GM10248 (cell line): ENCODE measurements at regions of chr9 and their contacts with region 1.

Region 1: GRCh38 chr9:35732122-35732799 is at the starts of genes CREB3 and TLN1:
- DNase-seq: peak; percentile 97
- CTCF ChIP-seq: peak; percentile 47

Region 2: DNA sequence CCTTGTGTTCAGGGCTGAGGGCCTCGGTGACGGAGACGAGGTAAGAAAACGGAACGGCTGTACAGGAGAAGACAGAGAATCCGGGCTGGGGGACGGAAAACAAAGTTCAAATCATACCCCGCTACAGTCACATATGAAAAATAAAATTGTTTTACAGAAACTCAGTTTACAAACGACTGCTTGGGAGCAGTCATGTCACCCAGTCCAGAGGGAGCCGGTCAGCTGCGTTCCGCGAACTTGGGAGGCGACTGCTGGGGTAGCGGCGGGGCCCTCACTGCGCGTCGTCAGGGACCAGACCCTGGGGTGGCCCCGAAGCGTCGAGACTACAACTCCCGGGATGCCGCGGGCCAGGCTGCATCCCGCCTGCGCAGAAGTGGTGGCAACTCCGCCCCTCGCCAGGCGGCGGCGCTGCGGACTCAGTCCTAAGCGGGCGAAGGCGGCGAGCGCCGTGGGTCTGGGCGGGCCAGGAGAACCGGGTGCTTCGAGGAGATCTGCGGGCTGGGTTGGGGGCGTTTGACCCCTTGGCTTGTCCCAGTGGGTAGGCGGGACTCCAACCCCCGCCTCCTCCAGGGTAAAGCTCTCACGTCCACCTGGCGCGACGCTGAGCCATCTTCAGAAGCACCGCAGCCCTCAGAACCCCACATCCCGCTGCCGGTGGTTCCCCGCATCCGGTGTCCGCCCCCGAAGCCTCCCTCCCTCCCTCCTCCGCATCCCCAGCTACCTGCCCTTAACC is 85.6 kb before region 1 on chr9:
- CTCF ChIA-PET with region 1: interaction called, 20 read pairs
- POLR2A ChIA-PET with region 1: interaction called, 5 read pairs
- DNase-seq: peak; percentile 94
- CTCF ChIP-seq: peak; percentile 98

Region 3: GRCh38 chr9:35690431-35691333 is 41.6 kb before region 1 on chr9:
- CTCF ChIA-PET with region 1: interaction called, 130 read pairs
- POLR2A ChIA-PET with region 1: interaction called, 4 read pairs
- DNase-seq: peak; percentile 59
- CTCF ChIP-seq: no peak

Region 4: GRCh38 chr9:35716230-35716629 is 16.0 kb before region 1 on chr9:
- CTCF ChIA-PET with region 1: interaction called, 72 read pairs
- POLR2A ChIA-PET with region 1: interaction called, 7 read pairs
- DNase-seq: no peak
- CTCF ChIP-seq: no peak

Region 5: GRCh38 chr9:35756275-35757225 is 24.3 kb after region 1 on chr9:
- CTCF ChIA-PET with region 1: interaction called, 23 read pairs
- POLR2A ChIA-PET with region 1: interaction called, 4 read pairs
- DNase-seq: peak; percentile 78
- CTCF ChIP-seq: peak; percentile 84

Region 6: GRCh38 chr9:35798658-35799374 is 66.6 kb after region 1 on chr9:
- CTCF ChIA-PET with region 1: no interaction called
- POLR2A ChIA-PET with region 1: no interaction called
- DNase-seq: no peak
- CTCF ChIP-seq: no peak